Ascending aorta (tissue), 2 donors: ENCODE measurements at regions of chr4 and their contacts with region 1.

Region 1: GRCh38 chr4:112857461-112857860 is 192.0 kb upstream of the ANK2 start:
- DNase-seq: peak in 1 of 2 donors; percentile 69
- H3K4me3 ChIP-seq: no peak overlapping the region
- H3K27ac ChIP-seq: peak overlapping the region; percentile 40 to 68
- H3K4me1 ChIP-seq: peaks cover 0 to 8% of the 10 kb centered on the region in 2 donors
- H3K27me3 ChIP-seq: no peaks in the 10 kb centered on the region
- CTCF ChIP-seq: no peak

Region 2: DNA sequence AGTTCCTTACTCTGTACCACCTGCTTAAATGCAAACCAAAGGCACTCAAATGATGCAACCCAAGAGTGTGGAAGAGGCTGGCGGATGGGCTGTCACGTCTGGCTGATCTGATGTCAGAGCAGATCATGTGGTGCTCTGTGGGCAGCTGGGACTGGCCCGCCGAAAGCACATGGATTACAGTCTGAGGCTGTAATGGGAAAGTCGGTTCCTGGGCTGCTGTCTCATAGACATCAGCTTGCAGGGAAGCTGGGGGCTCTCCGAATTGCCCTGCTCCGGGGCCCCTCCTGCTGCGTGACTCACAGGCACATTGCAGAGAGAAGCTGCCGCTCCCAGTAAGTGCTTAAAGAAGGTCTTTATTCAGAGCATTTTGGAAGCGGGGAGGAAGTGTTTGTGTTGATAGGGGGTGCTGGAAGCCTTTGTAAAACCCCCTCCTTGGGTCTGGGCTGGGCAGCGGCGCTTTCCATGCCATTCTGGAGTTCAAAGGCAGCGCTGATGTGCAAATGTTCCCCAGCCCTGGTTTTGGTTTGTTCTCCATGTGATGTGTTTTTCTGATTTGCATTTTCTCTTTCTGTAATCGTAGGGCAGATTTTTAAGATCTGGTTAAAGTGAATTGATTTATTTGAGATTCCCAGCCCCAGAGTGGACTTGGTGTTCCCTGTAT is 39.4 kb before region 1 on chr4:
- intact Hi-C with region 1: loop called (anchors 2 kb)
- DNase-seq: peak; percentile 40 to 88
- H3K4me3 ChIP-seq: peak overlapping the region; percentile 54 to 69
- H3K27ac ChIP-seq: peak overlapping the region; percentile 22 to 25
- H3K4me1 ChIP-seq: peaks cover 0 to 11% of the 10 kb centered on the region in 2 donors
- H3K27me3 ChIP-seq: no peaks in the 10 kb centered on the region
- CTCF ChIP-seq: no peak

Region 3: DNA sequence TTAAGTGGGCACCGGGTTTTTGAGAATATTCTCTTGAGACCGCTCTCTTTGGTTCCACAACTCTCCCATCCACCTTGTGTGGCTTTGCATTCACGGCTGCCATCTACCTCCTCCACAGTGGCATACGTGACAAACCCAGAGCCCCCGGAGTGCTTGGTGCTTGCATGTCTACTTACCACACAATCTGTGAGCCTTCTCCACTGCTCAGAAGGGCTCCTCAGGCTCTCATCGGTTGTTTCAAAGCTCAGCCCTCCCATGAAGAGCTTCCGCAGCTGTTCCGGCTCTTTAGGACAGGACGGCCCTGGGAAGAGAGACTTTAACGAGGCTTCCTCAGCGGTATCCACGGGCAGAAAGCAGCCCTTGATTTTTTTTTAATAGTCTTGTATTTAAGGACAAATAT is 24.4 kb after region 1 on chr4:
- intact Hi-C with region 1: no loop called
- DNase-seq: no peak
- H3K4me3 ChIP-seq: no peak overlapping the region
- H3K27ac ChIP-seq: no peak overlapping the region
- H3K4me1 ChIP-seq: no peaks in the 10 kb centered on the region
- H3K27me3 ChIP-seq: no peaks in the 10 kb centered on the region
- CTCF ChIP-seq: no peak

Region 4: DNA sequence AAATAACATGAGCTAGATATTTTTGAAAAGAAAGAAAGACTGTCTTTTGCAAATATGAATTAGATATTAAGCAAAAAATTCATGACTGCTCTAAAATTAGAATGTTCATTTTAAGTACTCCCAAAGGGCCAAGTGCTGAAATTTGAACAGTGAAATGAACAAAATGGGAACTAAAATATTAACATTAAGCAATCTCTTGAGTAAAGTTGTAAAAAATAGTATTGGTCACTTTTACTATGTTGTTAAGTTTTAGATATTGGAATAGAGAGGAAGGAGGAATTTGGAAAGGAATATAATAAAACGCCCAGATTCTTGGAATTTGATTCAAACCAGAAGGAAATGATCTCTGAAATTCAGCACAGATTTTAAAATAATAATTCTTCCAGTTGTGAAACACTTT is 66.1 kb after region 1 on chr4:
- intact Hi-C with region 1: loop called (anchors 5 kb)
- DNase-seq: no peak
- H3K4me3 ChIP-seq: no peak overlapping the region
- H3K27ac ChIP-seq: peak overlapping the region; percentile 12 to 57
- H3K4me1 ChIP-seq: peaks cover 0 to 12% of the 10 kb centered on the region in 2 donors
- H3K27me3 ChIP-seq: no peaks in the 10 kb centered on the region
- CTCF ChIP-seq: no peak